ENCODE measurements at regions of chr18 and their contacts with region 1.

Region 1: GRCh38 chr18:50287441-50288347 is at the start of gene CXXC1:
- DNase-seq: peak; percentile 97
- H3K4me3 Mint-ChIP-seq: peak within 1 kb of the TSS; percentile 93
- H3K27ac Mint-ChIP-seq: peak within 1 kb of the TSS; percentile 95
- H3K4me1 Mint-ChIP-seq: peaks cover 24% of the 10 kb centered on the region
- H3K27me3 Mint-ChIP-seq: no peaks in the 10 kb centered on the region
- total RNA-seq, gene CXXC1: 71.5 to 75.3 TPM

Region 2: DNA sequence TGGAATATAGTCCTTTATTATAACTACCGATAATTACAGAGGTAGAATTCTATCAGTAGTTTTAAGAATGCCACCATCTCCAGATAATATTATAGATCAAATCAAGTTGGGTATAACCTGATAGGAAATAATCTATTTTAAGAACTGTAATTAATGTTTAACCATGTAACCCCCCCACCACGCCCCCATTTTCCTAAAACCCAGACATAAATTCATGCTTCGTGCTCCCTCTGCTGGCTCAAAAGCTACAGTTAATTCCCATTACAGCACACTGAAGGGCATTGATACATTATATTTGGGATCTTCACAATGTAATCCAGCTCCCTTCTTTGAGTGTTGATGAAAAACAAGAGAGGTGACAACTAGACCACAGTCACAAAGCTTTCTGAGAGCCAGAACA is 1109.0 kb before region 1 on chr18:
- CTCF ChIA-PET with region 1: no interaction called
- intact Hi-C with region 1: no loop called
- DNase-seq: peak; percentile 20
- H3K4me3 Mint-ChIP-seq: no peak overlapping the region
- H3K27ac Mint-ChIP-seq: no peak overlapping the region
- H3K4me1 Mint-ChIP-seq: peaks cover 15% of the 10 kb centered on the region
- H3K27me3 Mint-ChIP-seq: no peaks in the 10 kb centered on the region

Region 3: GRCh38 chr18:49486953-49487710 is 800.6 kb before region 1 on chr18 and contains the start of gene C18orf32:
- CTCF ChIA-PET with region 1: no interaction called
- intact Hi-C with region 1: loop called (anchors 1 kb)
- DNase-seq: peak; percentile 94
- H3K4me3 Mint-ChIP-seq: peak within 1 kb of the TSS; percentile 94
- H3K27ac Mint-ChIP-seq: peak within 1 kb of the TSS; percentile 94
- H3K4me1 Mint-ChIP-seq: peaks cover 63% of the 10 kb centered on the region
- H3K27me3 Mint-ChIP-seq: no peaks in the 10 kb centered on the region
- total RNA-seq, gene C18orf32: 24.1 to 26.6 TPM

Region 4: DNA sequence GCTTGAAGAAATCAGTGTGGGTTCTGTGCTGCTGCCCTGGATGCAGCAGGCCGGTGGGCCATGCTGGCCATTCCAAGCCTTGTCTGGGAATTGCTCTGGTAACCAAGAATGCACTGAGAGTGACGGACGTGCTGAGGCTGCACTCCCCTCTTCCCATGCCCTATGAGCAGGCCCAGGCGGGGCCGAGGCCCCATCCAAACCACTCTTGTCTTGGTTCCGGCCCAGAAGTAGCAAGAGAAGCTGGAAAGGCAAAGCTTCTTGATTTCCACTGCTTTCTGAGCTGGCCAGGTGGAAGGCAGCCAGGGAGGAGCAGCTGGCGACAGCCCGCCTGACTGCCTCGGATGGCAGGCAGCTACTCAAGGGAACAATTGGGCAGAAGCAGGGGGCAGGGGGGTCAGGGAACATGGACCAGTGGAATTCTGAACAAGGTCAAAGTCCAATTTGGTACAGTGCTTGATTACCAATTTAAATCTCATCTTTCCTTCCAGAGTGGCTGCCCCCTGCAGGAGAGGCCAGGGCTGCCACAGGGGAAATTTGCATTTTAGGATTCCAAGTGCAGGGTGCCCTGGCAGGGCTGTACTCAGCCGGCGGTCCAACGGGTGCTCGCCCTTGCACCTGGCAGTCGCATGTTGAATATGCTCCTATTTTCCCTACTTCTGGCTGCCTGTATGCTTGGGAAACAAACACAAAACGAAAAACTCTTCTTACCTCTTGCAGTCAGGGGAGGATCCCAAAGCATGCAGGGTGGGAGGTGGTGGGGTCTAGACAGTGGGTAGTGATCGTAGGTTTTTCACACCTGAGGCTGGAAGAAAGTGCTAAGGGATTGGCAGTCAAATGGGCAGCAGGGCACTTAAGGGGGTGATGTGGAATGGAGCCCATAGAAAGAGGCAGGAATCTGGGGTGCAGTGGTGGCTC is 658.6 kb before region 1 on chr18:
- CTCF ChIA-PET with region 1: no interaction called
- intact Hi-C with region 1: no loop called
- DNase-seq: no peak
- H3K4me3 Mint-ChIP-seq: no peak overlapping the region
- H3K27ac Mint-ChIP-seq: no peak overlapping the region
- H3K4me1 Mint-ChIP-seq: no peaks in the 10 kb centered on the region
- H3K27me3 Mint-ChIP-seq: no peaks in the 10 kb centered on the region

Region 5: GRCh38 chr18:49813319-49814146 is 474.2 kb before region 1 on chr18 and contains the start of gene ACAA2:
- CTCF ChIA-PET with region 1: no interaction called
- intact Hi-C with region 1: loop called (anchors 5 kb)
- DNase-seq: peak; percentile 80
- H3K4me3 Mint-ChIP-seq: peak within 1 kb of the TSS; percentile 90
- H3K27ac Mint-ChIP-seq: peak within 1 kb of the TSS; percentile 96
- H3K4me1 Mint-ChIP-seq: peaks cover 36% of the 10 kb centered on the region
- H3K27me3 Mint-ChIP-seq: no peaks in the 10 kb centered on the region
- total RNA-seq, gene ACAA2: 67.9 to 69.8 TPM

Region 6: GRCh38 chr18:50249576-50249975 is 38.1 kb before region 1 on chr18:
- CTCF ChIA-PET with region 1: no interaction called
- intact Hi-C with region 1: no loop called
- DNase-seq: no peak
- H3K4me3 Mint-ChIP-seq: no peak overlapping the region
- H3K27ac Mint-ChIP-seq: no peak overlapping the region
- H3K4me1 Mint-ChIP-seq: peaks cover 3% of the 10 kb centered on the region
- H3K27me3 Mint-ChIP-seq: no peaks in the 10 kb centered on the region

Region 7: GRCh38 chr18:50297621-50298442 is 10.1 kb after region 1 on chr18:
- CTCF ChIA-PET with region 1: no interaction called
- intact Hi-C with region 1: loop called (anchors 1 kb)
- DNase-seq: peak; percentile 88
- H3K4me3 Mint-ChIP-seq: peak overlapping the region; percentile 68
- H3K27ac Mint-ChIP-seq: no peak overlapping the region
- H3K4me1 Mint-ChIP-seq: peaks cover 5% of the 10 kb centered on the region
- H3K27me3 Mint-ChIP-seq: peaks cover 19% of the 10 kb centered on the region

Region 8: GRCh38 chr18:50320719-50321118 is 33.0 kb after region 1 on chr18:
- CTCF ChIA-PET with region 1: no interaction called
- intact Hi-C with region 1: loop called (anchors 2 kb)
- DNase-seq: no peak
- H3K4me3 Mint-ChIP-seq: no peak overlapping the region
- H3K27ac Mint-ChIP-seq: no peak overlapping the region
- H3K4me1 Mint-ChIP-seq: peaks cover 12% of the 10 kb centered on the region
- H3K27me3 Mint-ChIP-seq: no peaks in the 10 kb centered on the region

Region 9: DNA sequence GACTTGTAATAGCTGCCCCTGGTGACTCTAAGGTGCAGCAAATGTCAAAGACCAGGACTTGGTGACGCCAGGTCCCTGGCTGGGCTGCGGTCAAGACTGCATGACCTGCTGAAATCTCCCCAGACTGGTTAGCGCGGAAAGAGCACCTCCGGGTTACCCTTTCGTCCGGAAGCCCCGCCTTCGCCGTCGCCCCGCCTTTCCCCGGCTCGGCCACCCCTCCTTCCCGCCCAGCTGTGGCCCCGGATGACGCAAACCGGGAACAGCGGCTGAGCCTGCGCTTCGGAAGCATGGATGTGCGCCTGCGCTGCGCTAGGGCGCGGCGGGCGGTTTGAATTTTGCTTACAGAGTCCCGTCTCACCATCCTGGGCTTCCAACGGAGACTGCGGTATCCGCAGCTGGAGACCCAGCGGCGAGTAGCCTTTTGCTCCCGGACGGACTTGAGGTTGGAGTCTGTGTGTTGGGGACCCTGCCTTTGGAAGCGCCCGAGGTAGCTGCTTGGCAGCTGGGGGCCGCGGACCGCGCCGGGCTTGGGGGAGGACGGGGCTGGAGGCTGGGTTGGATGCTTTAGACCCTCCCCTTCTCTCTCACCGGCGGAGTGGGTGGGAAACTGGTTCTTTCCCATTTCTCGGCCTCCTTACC is 87.2 kb after region 1 on chr18 and contains the start of gene SKA1:
- CTCF ChIA-PET with region 1: no interaction called
- intact Hi-C with region 1: loop called (anchors 1 kb)
- DNase-seq: peak; percentile 95
- H3K4me3 Mint-ChIP-seq: peak within 1 kb of the TSS; percentile 88
- H3K27ac Mint-ChIP-seq: peak within 1 kb of the TSS; percentile 87
- H3K4me1 Mint-ChIP-seq: peaks cover 2% of the 10 kb centered on the region
- H3K27me3 Mint-ChIP-seq: peaks cover 5% of the 10 kb centered on the region
- total RNA-seq, gene SKA1: 36.1 to 36.3 TPM

Region 10: DNA sequence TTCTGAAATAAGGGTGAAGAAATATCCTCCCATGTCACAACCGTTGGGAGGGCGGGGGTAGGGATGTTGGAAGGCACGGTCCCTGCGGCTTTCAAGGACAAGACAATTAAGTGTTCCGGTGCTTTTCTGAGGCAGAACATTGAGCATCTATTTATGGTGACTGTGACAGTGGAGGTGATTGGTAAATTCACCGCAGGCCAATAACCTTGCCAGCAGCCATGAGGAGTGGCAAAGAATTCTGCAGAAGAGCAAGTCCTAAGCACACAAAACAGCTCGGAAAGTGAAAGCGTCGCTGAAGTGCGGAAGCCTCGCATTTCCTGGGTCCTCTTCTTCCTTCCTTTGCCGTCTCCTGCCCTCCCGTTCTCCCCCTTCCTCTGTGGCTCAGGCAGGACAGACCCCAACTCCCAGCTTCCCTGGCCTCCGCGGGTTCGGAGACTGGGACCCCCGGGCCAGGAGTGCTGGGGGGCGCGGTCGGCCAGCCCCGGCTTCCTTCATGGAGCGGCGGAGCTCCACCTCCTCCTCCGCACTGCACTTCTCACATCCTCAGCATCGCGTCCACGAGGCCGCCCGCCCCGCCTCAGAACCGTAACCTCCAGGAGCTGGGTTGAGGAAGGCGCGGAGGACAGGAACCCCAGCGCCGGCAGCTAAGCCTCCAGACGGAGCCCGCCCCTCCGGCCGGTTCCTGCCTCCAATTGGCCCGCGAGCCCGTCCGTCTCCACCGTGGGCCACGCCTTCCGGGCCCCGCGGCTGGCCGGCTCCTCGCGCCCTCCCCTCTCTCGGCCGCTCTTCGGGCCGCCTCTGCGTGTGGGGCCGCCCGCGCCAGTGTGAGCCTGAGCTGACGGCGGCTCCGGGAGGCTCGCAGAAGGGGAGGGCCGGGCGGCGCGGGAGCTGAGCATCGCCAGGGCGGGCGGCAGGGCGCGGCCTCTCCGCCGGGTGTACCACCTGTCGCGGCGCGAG is 590.9 kb after region 1 on chr18 and contains the start of gene ME2:
- CTCF ChIA-PET with region 1: no interaction called
- intact Hi-C with region 1: loop called (anchors 1 kb)
- DNase-seq: peak; percentile 90
- H3K4me3 Mint-ChIP-seq: peak within 1 kb of the TSS; percentile 98
- H3K27ac Mint-ChIP-seq: peak within 1 kb of the TSS; percentile 99
- H3K4me1 Mint-ChIP-seq: peaks cover 27% of the 10 kb centered on the region
- H3K27me3 Mint-ChIP-seq: peaks cover 3% of the 10 kb centered on the region
- total RNA-seq, gene ME2: 137 to 146 TPM